ENCODE measurements at regions of chr22 and their contacts with region 1.

Region 1: DNA sequence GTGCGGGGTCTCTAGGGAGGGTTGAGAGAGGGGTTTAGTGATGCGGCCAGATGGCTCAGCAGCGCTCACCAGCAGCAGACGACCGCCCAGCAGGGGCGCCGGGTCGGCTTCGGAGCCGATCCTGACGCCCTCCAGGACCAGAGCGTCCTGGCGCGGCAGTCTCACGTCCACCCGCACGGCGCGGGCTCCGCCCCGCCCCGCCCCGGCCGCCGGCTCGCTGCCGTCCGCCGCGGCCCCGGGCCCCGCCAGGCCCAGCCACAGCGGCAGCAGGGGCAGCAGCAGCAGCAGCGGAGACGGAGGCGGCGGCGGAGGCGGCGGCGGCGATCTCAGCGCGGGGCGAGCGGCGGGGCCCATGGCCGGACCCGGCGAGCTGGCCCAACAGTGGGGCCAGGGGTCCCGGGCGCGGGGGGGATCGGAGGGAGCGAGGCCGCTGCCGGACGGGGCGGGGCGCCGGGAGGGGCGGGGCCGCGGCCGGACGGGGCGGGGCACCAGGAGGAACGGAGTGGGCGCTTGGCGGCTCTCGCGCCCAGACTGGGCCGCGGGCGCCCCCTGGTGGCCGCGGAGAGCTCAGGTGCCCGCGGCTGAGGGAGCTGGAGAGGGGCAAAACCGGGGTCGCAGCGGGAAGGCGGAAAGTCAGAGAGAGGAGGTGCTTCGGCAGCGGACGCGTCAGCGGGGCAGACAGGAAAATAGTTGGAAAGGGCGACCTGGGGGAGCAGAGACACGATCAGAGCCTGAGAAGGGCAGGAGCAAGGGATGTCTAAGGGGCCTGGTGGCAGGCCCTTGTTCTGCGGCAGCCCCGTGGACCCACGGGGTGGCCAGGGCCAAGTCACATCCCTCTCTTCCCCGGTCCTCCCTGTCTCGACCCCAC is at the start of gene RNF215:
- DNase-seq: peak; percentile 78
- ATAC-seq: peak; percentile 78
- H3K4me3 Mint-ChIP-seq: peak within 1 kb of the TSS; percentile 76
- H3K27ac Mint-ChIP-seq: peak within 1 kb of the TSS; percentile 43
- H3K4me1 Mint-ChIP-seq: peaks cover 15% of the 10 kb centered on the region
- H3K27me3 Mint-ChIP-seq: no peaks in the 10 kb centered on the region
- CTCF ChIP-seq: peak; percentile 89
- total RNA-seq, gene RNF215: 7.1 to 7.2 TPM

Region 2: DNA sequence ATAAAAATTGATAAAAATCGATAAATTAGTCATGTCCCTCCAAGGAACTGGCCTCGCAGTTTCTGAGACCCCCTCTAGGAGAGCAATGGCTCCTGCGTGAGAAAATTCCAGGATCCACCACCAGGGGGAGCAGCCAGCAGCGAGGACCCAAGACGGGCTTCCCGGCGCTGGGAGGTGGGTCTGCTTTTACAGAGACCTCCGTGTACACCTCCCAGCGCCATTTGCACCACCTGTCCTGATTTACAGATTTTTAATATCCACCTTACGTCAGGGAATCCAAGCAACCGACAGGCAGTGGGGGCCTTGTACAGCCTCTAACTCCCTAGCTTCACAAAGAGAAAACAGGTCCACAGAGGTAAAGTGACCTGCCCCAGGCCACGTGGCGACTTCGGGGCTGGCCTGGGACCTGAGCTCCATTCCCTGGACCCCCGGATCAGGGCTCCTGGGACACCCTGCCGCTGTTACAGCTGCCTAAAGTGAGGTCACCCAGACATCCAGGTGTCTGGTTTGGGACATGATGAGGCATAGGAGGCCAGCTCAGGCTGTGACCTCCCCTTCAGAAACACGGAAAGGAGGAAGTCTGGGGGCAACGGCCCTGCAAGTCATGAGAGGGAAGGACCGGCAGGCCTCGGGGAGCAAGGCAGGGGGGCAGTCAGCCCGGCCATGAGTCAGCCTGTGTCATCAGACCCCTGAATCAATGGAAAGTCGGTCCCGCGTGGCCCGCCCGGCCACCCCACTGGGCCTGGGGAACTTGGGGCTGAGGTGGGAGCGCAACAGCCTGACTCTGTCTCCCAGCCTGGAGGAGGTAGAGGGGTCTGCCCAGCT is 124.1 kb before region 1 on chr22:
- CTCF ChIA-PET with region 1: interaction called, 17 read pairs
- POLR2A ChIA-PET with region 1: interaction called, 3 read pairs
- intact Hi-C with region 1: no loop called
- DNase-seq: peak; percentile 88
- ATAC-seq: no peak
- H3K4me3 Mint-ChIP-seq: peak overlapping the region; percentile 95
- H3K27ac Mint-ChIP-seq: peak overlapping the region; percentile 83
- H3K4me1 Mint-ChIP-seq: peaks cover 31% of the 10 kb centered on the region
- H3K27me3 Mint-ChIP-seq: no peaks in the 10 kb centered on the region
- CTCF ChIP-seq: peak; percentile 100

Region 3: GRCh38 chr22:30356449-30357235 is 30.6 kb before region 1 on chr22 and contains the starts of genes CCDC157 and SF3A1:
- CTCF ChIA-PET with region 1: interaction called, 12 read pairs
- POLR2A ChIA-PET with region 1: interaction called, 3 read pairs
- intact Hi-C with region 1: no loop called
- DNase-seq: peak; percentile 96
- ATAC-seq: peak; percentile 91
- H3K4me3 Mint-ChIP-seq: peak within 1 kb of the TSS; percentile 96
- H3K27ac Mint-ChIP-seq: peak within 1 kb of the TSS; percentile 92
- H3K4me1 Mint-ChIP-seq: peaks cover 42% of the 10 kb centered on the region
- H3K27me3 Mint-ChIP-seq: no peaks in the 10 kb centered on the region
- CTCF ChIP-seq: no peak
- total RNA-seq, gene CCDC157: 2.2 to 2.4 TPM
- total RNA-seq, gene SF3A1: 252 to 262 TPM

Region 4: DNA sequence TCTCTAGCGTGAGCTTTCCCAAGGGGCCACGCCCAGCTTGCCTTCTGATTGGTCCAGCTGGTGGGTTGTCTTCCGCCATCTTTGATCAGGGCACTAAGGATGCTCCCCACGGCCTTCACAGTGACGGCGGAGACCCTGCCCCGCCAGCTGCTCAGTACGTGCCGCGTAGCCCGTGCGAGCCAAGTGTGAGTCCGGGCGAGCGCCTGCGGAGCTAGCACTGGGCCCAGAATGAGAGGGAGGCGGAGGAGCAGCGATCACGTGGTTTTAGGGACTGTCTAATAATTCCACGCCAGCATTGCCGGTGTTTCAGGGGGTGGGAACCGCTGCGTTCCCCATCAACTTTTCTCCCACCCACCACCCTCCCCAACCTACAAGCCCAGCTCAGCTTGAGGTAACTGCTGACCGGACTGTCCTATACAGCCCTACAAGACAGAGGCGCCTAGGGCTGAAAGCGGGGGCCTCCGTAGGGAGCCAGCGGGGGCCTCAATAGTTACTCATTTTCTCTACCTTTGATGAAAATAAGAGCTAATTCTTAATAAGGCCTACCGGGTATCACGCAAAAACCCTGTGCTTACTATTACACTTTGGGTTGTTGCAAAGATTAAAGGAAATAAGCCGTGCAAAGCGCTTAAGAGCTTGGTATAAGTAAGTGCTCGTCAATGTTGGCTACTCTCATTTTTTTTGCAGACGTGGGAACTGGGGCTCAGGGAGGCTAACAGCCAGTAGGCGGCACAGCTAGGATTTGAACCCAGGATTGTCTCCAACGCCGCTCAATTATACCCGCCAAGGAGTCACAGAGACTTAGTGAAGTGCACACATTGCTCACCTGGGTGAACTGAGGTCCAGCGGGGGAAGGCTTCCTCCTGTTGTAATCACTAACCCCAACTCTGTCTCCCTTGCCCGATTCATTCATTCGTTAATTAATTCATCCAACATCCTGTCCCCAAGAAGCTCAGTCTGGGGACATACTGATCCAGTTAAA is 37.1 kb after region 1 on chr22:
- CTCF ChIA-PET with region 1: interaction called, 138 read pairs
- POLR2A ChIA-PET with region 1: interaction called, 20 read pairs
- intact Hi-C with region 1: loop called (anchors 2 kb)
- DNase-seq: peak; percentile 99
- ATAC-seq: peak; percentile 79
- H3K4me3 Mint-ChIP-seq: peak overlapping the region; percentile 93
- H3K27ac Mint-ChIP-seq: peak overlapping the region; percentile 96
- H3K4me1 Mint-ChIP-seq: peaks cover 42% of the 10 kb centered on the region
- H3K27me3 Mint-ChIP-seq: no peaks in the 10 kb centered on the region
- CTCF ChIP-seq: no peak

Region 5: DNA sequence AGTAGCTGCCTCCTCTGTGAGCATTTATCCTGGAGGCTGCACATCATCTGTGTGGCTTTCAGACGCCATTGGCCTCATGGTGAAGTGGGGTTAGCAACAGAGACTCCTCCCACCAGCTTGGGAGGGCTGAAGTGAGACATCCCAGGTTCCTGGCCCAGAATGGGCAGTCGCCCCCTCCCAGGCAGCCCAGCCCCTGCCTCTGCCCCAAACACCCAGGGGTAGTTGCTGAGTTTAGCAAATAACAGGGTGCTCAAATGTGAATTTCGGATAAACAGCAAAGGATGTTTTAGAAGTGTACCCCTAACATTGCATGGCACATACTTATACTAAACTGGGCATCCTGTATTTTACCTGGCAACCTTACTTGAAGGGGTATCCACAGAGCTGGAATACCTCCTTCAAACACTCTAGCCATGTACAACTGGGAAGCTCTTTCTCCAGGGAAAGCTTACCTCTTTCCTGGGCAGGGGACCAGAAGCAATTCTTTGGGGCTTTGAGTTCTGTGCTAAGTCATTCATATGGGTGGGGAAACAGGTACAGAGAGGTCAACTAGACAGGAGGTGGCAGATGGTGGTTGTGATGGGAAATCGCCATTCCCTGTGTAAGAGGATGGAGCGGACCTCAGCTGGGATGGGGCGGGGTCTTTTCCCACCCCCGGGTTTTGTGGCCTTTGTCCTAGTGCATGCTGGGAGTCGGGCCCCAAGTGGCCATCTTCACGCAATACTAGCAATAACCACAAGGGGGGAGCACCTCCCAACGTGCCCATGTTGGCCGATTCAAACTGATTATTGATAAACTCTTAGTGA is 57.6 kb after region 1 on chr22:
- CTCF ChIA-PET with region 1: interaction called, 18 read pairs
- POLR2A ChIA-PET with region 1: no interaction called
- intact Hi-C with region 1: no loop called
- DNase-seq: peak; percentile 80
- ATAC-seq: peak; percentile 85
- H3K4me3 Mint-ChIP-seq: no peak overlapping the region
- H3K27ac Mint-ChIP-seq: peak overlapping the region; percentile 27
- H3K4me1 Mint-ChIP-seq: peaks cover 21% of the 10 kb centered on the region
- H3K27me3 Mint-ChIP-seq: peaks cover 37% of the 10 kb centered on the region
- CTCF ChIP-seq: peak; percentile 80

Region 6: GRCh38 chr22:30485362-30485988 is 98.3 kb after region 1 on chr22:
- CTCF ChIA-PET with region 1: interaction called, 59 read pairs
- POLR2A ChIA-PET with region 1: interaction called, 3 read pairs
- intact Hi-C with region 1: loop called (anchors 1 kb)
- DNase-seq: peak; percentile 82
- ATAC-seq: peak; percentile 99
- H3K4me3 Mint-ChIP-seq: no peak overlapping the region
- H3K27ac Mint-ChIP-seq: no peak overlapping the region
- H3K4me1 Mint-ChIP-seq: no peaks in the 10 kb centered on the region
- H3K27me3 Mint-ChIP-seq: peaks cover 2% of the 10 kb centered on the region
- CTCF ChIP-seq: peak; percentile 97